ENCODE measurements at regions of chr3 and their contacts with region 1.

Region 1: DNA sequence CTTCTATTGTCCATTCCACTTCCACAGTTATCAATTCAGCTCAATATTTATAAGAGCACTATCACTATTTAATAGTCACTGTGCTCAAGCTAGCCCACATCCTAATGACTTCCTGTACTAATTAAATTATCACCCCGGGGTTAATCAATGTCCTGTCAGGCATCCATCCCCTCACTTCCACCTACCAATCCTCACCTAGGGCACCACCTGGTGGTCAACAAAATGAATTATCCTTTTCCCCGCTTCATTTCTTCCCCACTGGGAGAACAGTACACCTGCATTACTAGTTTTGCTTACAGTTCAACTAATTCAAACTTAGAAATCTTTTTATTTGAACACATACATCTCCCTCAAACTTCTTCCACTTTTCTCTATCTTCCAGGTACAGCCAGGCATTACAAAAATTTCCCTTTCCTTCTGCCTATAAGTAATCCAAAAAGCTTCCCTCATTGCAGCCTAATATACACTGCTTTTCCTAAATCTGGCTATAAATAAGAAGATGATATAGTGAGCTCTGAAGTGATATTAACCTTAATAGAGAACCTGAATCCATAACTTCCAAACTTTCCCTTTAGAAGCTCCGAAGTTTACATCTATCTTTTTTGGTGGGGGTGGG is 68.5 kb downstream of the TMCC1 start:
- DNase-seq: peak; percentile 22
- H3K4me3 ChIP-seq: no peak overlapping the region
- H3K27ac ChIP-seq: no peak overlapping the region
- H3K4me1 ChIP-seq: no peaks in the 10 kb centered on the region
- H3K27me3 ChIP-seq: no peaks in the 10 kb centered on the region
- CTCF ChIP-seq: peak; percentile 51 to 76 (median 70)
- POLR2A ChIP-seq: no peak

Region 2: DNA sequence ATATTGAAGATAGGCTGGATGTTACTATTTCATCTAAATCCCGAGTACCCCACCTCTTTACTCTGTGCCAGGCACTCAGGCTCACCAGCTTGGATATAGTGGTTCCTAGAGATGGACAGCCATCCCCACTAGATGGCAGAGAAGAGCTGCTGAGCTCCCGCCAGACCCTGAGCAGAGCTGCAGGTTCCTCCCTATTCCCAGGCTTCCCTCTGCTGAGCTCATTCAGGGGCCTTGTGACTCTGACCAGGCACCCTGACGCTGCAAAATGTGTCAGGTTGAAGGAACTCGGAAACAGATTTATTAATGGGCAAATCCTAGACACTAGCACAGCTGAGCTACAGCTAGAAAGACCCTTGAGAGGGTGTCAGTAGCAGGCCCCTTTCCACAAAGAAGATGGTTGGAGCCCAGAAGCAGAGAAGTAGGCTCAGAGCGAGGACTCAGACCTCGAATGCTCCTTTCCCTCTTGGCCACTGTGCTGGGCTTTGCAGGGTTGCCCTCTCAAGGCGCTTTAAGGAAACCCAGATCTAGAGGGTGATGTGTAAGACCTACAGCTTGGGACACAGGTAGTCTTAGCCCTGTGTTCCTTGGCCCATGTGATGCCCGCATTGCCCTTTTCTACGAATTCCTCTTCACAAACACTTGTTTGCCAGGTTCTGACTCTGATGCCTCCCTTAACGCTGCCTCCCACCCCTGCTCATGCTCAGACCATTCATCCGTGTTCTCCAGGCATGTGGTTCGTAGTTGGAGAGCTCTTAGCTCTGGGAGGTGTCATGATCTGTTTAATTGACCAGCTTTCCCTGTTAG is 334.6 kb before region 1 on chr3:
- intact Hi-C with region 1: loop called (anchors 5 kb)
- DNase-seq: peak; percentile 60
- H3K4me3 ChIP-seq: no peak overlapping the region
- H3K27ac ChIP-seq: peak overlapping the region; percentile 8 to 36
- H3K4me1 ChIP-seq: no peaks in the 10 kb centered on the region
- H3K27me3 ChIP-seq: no peaks in the 10 kb centered on the region
- CTCF ChIP-seq: peak; percentile 67 to 88 (median 78)
- POLR2A ChIP-seq: no peak

Region 3: GRCh38 chr3:129627429-129628168 is 197.4 kb before region 1 on chr3:
- intact Hi-C with region 1: loop called (anchors 10 kb)
- DNase-seq: peak; percentile 55
- H3K4me3 ChIP-seq: peak overlapping the region; percentile 47 to 52
- H3K27ac ChIP-seq: peak overlapping the region; percentile 87 to 94
- H3K4me1 ChIP-seq: peaks cover 5% of the 10 kb centered on the region
- H3K27me3 ChIP-seq: no peaks in the 10 kb centered on the region
- CTCF ChIP-seq: peak; percentile 45 to 87 (median 76)
- POLR2A ChIP-seq: no peak

Region 4: DNA sequence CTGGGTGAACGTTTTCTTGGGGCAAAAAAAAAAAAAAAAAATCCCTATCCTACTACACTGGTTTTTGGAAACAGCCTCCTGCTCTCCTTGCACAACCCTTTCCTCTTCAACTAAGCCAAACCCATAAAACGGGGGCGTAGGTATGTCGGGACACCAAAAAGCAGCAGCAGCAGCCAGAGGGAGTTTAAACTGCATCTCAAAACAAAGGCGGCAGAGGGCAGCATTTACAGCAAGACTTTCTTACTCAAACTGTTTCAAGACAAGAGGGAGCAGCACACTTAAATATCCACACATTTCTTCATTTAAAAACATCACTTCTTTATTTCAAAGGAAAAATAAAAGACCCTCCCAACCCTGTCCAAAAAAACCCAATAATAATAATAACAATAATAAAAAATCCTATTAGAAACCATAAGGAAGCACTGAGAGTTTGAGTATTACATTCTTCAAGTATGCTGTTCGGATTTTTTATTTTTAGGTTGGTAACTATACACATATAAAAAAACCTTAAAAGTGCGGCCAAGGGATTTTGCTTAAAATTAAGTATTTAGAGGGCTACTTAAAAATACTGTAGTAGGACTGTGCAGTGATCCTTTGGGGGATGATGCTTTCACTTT is 174.7 kb before region 1 on chr3:
- intact Hi-C with region 1: loop called (anchors 2 kb)
- DNase-seq: peak; percentile 73
- H3K4me3 ChIP-seq: no peak overlapping the region
- H3K27ac ChIP-seq: no peak overlapping the region
- H3K4me1 ChIP-seq: no peaks in the 10 kb centered on the region
- H3K27me3 ChIP-seq: no peaks in the 10 kb centered on the region
- CTCF ChIP-seq: peak; percentile 21 to 87 (median 76)
- POLR2A ChIP-seq: no peak

Region 5: DNA sequence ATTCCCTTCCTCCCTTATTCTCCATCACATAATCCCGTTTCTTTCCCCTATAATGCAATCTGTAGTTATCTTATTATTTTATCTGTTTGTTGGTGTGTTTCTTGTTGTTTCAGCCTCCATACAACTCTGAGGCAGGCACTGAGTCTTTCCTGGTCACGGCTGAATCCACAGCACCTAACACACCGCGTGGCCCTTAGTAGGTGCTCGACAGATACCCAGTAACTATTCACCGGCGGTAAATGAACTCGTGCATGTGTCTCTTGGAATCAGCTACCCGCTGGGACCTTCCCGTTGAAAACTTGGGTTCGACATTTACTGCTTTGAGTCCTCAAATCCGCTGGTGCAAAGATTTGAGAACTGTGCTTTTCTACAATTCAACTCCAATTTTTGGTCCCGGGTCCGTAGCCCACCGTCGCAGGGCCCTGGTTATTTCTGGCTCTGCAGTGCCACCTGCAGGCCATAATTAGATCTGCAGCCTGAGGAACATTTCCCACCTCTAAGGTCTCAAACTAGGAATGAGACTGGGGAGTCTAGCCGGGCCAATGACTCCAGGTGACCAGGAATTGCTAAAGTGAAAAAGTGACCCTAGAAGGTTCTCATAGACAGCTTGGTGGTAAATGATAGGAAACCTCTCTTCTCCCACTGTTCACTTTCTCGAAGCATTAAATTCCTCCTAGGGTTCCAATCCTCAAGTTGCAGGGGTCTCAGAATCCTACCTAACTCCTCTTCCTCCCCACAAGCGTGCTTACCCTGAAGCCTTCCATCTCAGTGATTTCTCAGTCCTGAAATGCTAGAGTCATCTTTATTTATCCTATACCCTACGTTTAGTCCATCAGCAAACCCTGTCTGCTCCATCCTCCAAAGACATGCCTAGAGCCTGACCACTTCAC is 109.4 kb after region 1 on chr3:
- intact Hi-C with region 1: loop called (anchors 1 kb)
- DNase-seq: no peak
- H3K4me3 ChIP-seq: peak overlapping the region in 1 of 2 donors; percentile 11
- H3K27ac ChIP-seq: no peak overlapping the region
- H3K4me1 ChIP-seq: no peaks in the 10 kb centered on the region
- H3K27me3 ChIP-seq: no peaks in the 10 kb centered on the region
- CTCF ChIP-seq: peak; percentile 69 to 94 (median 91)
- POLR2A ChIP-seq: no peak